ENCODE measurements at regions of chr18 and their contacts with region 1.

Region 1: GRCh38 chr18:44895176-44895798 is 214.6 kb downstream of the SETBP1 start:
- DNase-seq: peak in 4 of 5 donors; percentile 40 to 57 (median 46)
- ATAC-seq: peak in 3 of 4 donors; percentile 68 to 82 (median 80)
- H3K4me3 ChIP-seq: no peak overlapping the region
- H3K27ac ChIP-seq: no peak overlapping the region
- H3K4me1 ChIP-seq: peaks cover 0 to 33% (median 7%) of the 10 kb centered on the region in 12 donors
- H3K27me3 ChIP-seq: no peaks in the 10 kb centered on the region
- CTCF ChIP-seq: peak in 11 of 12 donors; percentile 22 to 57 (median 48)
- POLR2A ChIP-seq: no peak

Region 2: GRCh38 chr18:44123743-44124142 is 771.5 kb before region 1 on chr18:
- intact Hi-C with region 1: loop called in 1 of 10 experiments (anchors 10 kb)
- DNase-seq: no peak
- ATAC-seq: no peak
- H3K4me3 ChIP-seq: no peak overlapping the region
- H3K27ac ChIP-seq: no peak overlapping the region
- H3K4me1 ChIP-seq: no peaks in the 10 kb centered on the region
- H3K27me3 ChIP-seq: no peaks in the 10 kb centered on the region
- CTCF ChIP-seq: no peak
- POLR2A ChIP-seq: no peak

Region 3: DNA sequence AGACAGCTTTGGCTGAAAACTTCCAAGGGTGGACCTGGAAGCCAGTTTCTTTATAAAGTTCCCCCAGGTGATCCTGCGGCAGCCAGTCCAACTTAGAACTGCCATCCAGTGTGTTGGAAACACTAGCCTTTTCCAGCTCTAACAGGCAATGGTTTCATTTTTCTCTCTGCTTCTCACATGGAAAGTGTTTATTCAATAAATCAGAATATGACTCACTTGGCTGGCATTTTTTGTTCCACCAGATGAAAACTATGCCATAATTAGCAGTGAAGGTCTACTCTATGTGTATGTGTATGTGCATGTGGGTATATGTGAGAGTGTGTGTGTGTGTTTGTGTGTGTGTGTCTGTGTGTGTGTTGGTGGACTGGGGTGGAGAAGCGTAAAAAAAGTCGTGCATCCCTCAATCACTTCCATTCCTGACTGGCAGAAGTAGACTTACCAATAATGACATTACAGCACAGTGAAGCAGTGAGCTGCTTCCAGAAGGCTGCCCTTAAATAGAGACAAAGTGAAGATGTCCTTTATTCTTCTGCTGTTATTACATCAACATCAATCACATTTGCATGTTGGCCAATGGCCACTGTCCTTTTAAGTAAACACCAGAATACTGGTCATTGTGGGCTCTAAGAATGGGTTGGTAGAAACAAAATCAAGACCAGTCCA is 305.5 kb before region 1 on chr18:
- intact Hi-C with region 1: loop called in 2 of 10 experiments (anchors 5 to 10 kb)
- DNase-seq: no peak
- ATAC-seq: no peak
- H3K4me3 ChIP-seq: no peak overlapping the region
- H3K27ac ChIP-seq: peak overlapping the region in 1 of 12 donors; percentile 47
- H3K4me1 ChIP-seq: peaks cover 0 to 43% (median 5%) of the 10 kb centered on the region in 12 donors
- H3K27me3 ChIP-seq: no peaks in the 10 kb centered on the region
- CTCF ChIP-seq: no peak
- POLR2A ChIP-seq: no peak

Region 4: GRCh38 chr18:44594799-44595467 is 300.4 kb before region 1 on chr18:
- intact Hi-C with region 1: loop called in 1 of 10 experiments (anchors 10 kb)
- DNase-seq: no peak
- ATAC-seq: peak; percentile 63 to 89 (median 74)
- H3K4me3 ChIP-seq: no peak overlapping the region
- H3K27ac ChIP-seq: peak overlapping the region in 3 of 12 donors; percentile 13 to 34 (median 34)
- H3K4me1 ChIP-seq: peaks cover 0 to 60% (median 17%) of the 10 kb centered on the region in 12 donors
- H3K27me3 ChIP-seq: no peaks in the 10 kb centered on the region
- CTCF ChIP-seq: no peak
- POLR2A ChIP-seq: no peak

Region 5: GRCh38 chr18:44786688-44787087 is 108.6 kb before region 1 on chr18:
- intact Hi-C with region 1: loop called in 1 of 10 experiments (anchors 5 kb)
- DNase-seq: no peak
- ATAC-seq: no peak
- H3K4me3 ChIP-seq: peak overlapping the region in 1 of 12 donors; percentile 20
- H3K27ac ChIP-seq: peak overlapping the region in 1 of 12 donors; percentile 34
- H3K4me1 ChIP-seq: peaks cover 5 to 47% (median 33%) of the 10 kb centered on the region in 12 donors
- H3K27me3 ChIP-seq: peaks cover 0 to 4% (median 0%) of the 10 kb centered on the region in 9 donors
- CTCF ChIP-seq: no peak
- POLR2A ChIP-seq: no peak

Region 6: GRCh38 chr18:44870631-44871502 is 24.4 kb before region 1 on chr18:
- intact Hi-C with region 1: no loop called
- DNase-seq: no peak
- ATAC-seq: no peak
- H3K4me3 ChIP-seq: no peak overlapping the region
- H3K27ac ChIP-seq: no peak overlapping the region
- H3K4me1 ChIP-seq: peaks cover 0 to 3% (median 0%) of the 10 kb centered on the region in 12 donors
- H3K27me3 ChIP-seq: no peaks in the 10 kb centered on the region
- CTCF ChIP-seq: no peak
- POLR2A ChIP-seq: no peak

Region 7: DNA sequence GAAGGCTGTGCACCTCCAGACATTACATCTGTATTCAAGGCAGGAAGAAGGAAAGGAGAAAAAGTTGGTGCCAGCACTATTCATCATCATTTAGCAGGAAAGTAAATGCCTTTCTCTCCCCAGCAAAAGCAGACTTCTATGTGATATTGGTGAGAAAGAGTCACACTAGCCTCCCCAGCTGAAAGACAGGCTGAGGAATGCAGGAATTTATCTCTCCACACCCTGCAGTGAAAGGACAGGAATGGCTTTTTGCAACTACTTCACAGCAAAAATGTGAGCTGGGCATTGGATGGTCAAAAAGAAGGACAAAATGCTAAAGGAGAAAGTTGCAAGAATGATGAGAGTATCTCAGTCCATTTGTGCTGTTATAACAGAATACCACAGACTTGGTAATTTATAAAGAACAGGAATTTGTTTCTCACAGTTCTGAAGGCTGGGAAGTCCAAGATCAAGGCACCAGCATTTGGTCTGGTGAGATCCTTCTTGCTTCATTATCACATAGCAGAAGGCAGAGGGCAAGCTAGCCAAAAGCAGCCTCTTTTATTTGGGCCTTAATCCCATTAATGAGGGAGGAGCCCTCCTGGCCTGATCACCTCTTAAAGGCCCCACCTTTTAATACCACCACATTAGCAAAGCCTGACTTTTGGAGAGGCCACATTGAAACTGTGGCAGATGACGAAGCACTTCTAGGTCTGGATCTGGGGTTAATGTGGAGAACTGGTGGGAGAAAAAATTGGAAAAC is 331.9 kb after region 1 on chr18:
- intact Hi-C with region 1: no loop called
- DNase-seq: no peak
- ATAC-seq: no peak
- H3K4me3 ChIP-seq: no peak overlapping the region
- H3K27ac ChIP-seq: no peak overlapping the region
- H3K4me1 ChIP-seq: no peaks in the 10 kb centered on the region
- H3K27me3 ChIP-seq: no peaks in the 10 kb centered on the region
- CTCF ChIP-seq: no peak
- POLR2A ChIP-seq: no peak

Measured in heart left ventricle (tissue), 16 donors.